Dendritic cell treated with granulocyte-macrophage colony-stimulating factor and Interleukin-4, amounts not matched to agents 40 ng/mL and 50 ng/mL, for 4 days (primary cell): ENCODE measurements at regions of chr13 and their contacts with region 1.

Region 1: GRCh38 chr13:109786457-109787134 is at the start of gene IRS2:
- H3K4me3 Mint-ChIP-seq: peak within 1 kb of the TSS; percentile 85
- H3K27ac Mint-ChIP-seq: peak within 1 kb of the TSS; percentile 64
- H3K4me1 Mint-ChIP-seq: peaks cover 37% of the 10 kb centered on the region
- H3K27me3 Mint-ChIP-seq: peaks cover 3% of the 10 kb centered on the region

Region 2: DNA sequence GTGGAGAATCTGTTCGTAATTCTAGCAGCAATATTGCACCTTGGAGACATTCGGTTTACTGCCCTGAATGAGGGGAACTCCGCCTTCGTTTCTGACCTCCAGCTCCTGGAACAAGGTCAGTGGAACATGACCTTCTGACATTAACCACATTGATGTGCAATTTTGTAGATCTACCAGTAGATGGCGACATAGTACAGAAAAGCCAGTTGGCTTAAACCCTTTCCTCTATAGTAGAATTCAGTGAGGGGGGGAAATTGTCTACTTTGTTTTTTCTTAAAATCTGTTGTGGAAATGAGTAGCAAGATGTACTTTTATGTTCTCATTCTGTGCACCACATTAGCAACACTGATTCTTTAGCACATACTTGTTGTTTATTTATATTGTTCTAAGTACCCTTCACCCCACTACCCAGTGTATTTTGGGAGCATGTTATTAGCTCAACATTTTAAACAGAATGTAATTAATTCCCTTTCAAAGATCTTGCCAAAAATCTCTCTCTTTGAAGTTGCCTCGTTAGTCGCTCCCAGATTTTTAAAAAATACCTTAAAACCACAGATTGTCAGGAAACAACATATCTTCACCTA is 825.0 kb before region 1 on chr13:
- intact Hi-C with region 1: loop called (anchors 2 kb)
- H3K4me3 Mint-ChIP-seq: no peak overlapping the region
- H3K27ac Mint-ChIP-seq: no peak overlapping the region
- H3K4me1 Mint-ChIP-seq: peaks cover 7% of the 10 kb centered on the region
- H3K27me3 Mint-ChIP-seq: no peaks in the 10 kb centered on the region

Region 3: DNA sequence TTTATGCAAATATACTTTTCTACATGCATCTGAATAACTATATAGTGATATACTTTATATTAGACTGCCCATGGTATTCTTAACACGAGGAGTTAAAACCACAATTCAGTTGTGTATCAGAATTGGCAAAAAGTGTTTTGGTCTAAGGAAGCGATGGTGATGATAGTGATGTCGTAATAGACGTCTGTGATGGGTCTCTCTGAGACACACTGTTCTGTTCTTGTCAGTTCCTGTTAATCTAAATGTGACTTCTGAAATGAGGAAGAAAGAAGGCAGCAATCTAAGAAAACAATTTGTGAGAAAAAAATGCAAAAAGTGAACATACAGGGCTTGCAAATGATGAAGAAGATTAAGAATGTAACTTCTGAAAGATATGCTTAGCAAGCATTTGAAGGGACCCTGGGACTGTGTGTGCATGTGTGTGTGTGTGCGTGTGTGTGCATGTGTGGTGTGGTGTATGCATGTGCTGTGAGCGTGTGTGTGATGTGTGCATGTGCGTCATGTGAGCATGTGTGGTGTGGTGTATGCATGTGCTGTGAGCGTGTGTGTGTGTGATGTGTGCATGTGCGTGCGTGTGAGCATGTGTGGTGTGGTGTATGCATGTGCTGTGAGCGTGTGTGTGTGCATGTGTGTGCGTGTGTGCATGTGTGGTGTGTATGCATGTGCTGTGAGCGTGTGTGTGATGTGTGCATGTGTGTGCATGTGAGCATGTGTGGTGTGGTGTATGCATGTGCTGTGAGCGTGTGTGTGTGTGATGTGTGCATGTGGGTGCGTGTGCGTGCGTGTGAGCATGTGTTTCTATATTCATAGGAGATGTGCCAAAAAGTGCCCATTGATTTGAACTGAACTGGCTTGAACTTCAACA is 132.0 kb before region 1 on chr13:
- intact Hi-C with region 1: loop called (anchors 2 kb)
- H3K4me3 Mint-ChIP-seq: peak overlapping the region; percentile 48
- H3K27ac Mint-ChIP-seq: peak overlapping the region; percentile 86
- H3K4me1 Mint-ChIP-seq: peaks cover 54% of the 10 kb centered on the region
- H3K27me3 Mint-ChIP-seq: no peaks in the 10 kb centered on the region

Region 4: GRCh38 chr13:109844396-109844795 is 57.8 kb after region 1 on chr13:
- intact Hi-C with region 1: no loop called
- H3K4me3 Mint-ChIP-seq: no peak overlapping the region
- H3K27ac Mint-ChIP-seq: no peak overlapping the region
- H3K4me1 Mint-ChIP-seq: peaks cover 11% of the 10 kb centered on the region
- H3K27me3 Mint-ChIP-seq: peaks cover 16% of the 10 kb centered on the region

Region 5: GRCh38 chr13:110116072-110116487 is 329.5 kb after region 1 on chr13:
- intact Hi-C with region 1: loop called (anchors 10 kb)
- H3K4me3 Mint-ChIP-seq: peak overlapping the region; percentile 50
- H3K27ac Mint-ChIP-seq: no peak overlapping the region
- H3K4me1 Mint-ChIP-seq: peaks cover 24% of the 10 kb centered on the region
- H3K27me3 Mint-ChIP-seq: peaks cover 33% of the 10 kb centered on the region